Posterior cingulate gyrus (tissue), 11 donors: ENCODE measurements at regions of chr3 and their contacts with region 1.

Region 1: GRCh38 chr3:9749645-9750555 is at the start of gene OGG1:
- DNase-seq: peak; percentile 94 to 99 (median 97)

Region 2: GRCh38 chr3:9439331-9439730 is 310.6 kb before region 1 on chr3:
- intact Hi-C with region 1: no loop called
- DNase-seq: no peak

Region 3: GRCh38 chr3:9600597-9600996 is 149.3 kb before region 1 on chr3:
- intact Hi-C with region 1: no loop called
- DNase-seq: peak in 5 of 10 donors; percentile 8 to 82 (median 16)

Region 4: DNA sequence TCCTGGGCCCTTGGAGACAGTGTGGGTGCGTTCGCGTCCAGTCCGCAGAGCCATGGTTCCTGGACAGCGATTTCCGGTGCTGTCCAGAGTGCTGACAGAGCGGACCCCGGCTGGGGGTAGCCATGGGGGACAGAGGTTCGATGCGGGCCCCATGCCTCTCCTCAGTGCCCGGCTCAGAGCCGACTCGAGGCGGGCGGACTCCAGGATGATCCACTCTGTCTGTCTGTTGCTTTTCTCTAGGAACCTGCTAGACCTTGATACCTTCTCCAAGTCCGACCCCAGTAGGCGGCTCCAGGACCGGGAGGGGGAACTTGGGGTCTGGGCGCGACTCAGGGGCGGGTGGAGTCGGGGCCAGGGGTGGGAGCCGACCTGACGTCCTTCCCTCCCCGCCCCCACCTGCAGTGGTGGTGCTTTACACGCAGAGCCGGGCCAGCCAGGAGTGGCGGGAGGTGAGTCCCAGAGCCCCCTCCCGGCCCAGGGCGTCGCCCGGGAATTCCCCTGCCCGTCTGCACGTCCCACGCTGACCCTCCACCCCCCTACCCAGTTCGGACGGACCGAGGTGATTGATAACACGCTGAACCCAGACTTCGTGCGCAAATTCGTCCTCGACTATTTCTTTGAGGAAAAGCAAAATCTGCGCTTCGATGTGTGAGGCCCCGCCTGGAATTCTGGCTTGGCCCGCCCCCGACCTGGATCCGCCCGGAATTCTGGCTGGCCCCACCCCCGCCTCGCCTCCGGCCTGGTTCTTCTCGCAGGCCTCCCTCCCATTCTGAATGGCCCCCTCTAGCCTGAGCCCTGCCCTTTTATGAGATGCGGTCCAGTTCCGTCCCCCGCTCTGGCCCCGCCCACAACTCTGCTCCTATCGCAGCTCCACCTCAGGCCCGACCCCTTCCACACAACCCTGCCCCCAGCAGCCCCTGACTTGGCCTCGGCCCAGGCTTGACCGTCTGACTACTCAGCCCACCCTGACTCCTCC is 45.3 kb before region 1 on chr3:
- intact Hi-C with region 1: no loop called
- DNase-seq: peak in 7 of 10 donors; percentile 17 to 91 (median 52)

Region 5: GRCh38 chr3:9731206-9732079 is 18.5 kb before region 1 on chr3 and contains the start of gene BRPF1:
- intact Hi-C with region 1: loop called (anchors 1 kb)
- DNase-seq: peak; percentile 97 to 100 (median 99)

Region 6: GRCh38 chr3:9792405-9793160 is 42.7 kb after region 1 on chr3 and contains the starts of genes ARPC4 and TADA3:
- intact Hi-C with region 1: loop called (anchors 2 kb)
- DNase-seq: peak; percentile 81 to 98 (median 88)